Cardiac septum (tissue), 1 donor: ENCODE measurements at regions of chr11 and their contacts with region 1.

Region 1: GRCh38 chr11:18526521-18527296 is at the start of gene TSG101:
- DNase-seq: peak; percentile 97
- total RNA-seq, gene TSG101: 62.8 TPM

Region 2: DNA sequence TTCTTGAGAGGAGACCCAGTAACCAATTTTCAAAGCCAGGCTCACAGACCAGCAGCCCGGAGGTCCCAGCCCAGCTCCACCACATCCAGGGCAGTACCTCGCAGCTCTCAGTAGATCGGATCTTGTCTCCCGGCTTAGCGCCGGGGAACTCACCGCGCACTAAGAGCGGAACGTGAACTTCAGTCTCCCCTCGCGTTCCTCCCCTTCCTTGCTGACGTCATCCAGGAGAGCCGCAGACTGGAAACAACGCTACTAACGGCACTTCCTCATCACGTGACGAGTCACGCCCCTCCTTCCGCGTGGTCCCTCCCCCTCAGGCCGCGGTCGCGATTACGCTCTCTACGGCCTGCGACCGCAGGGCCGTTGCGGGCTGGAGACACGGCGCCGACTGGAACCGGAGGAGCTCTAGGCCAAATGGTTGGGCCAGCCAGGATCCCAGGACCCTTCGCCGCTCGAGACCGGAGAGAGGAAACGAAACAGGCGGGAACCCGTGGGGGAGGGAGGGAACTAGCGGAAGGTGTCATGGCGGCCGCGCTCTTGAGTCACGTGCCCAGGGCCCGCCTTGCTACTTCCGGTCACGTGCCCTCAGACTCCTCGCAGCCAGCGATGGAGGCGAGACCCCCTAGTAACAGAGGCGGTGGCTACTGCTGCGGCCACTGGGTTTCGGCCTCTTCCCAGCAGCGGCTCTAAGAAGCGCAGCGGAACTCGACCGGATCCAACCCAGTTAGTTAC is 204.6 kb before region 1 on chr11 and contains the starts of genes GTF2H1 and HPS5:
- intact Hi-C with region 1: loop called (anchors 1 kb)
- DNase-seq: peak; percentile 98
- total RNA-seq, gene GTF2H1: 23.6 TPM
- total RNA-seq, gene HPS5: 11.2 TPM